ENCODE measurements at regions of chr11 and their contacts with region 1.

Region 1: GRCh38 chr11:33904102-33904501 is 12.2 kb upstream of the LMO2 start:
- DNase-seq: no peak
- ATAC-seq: no peak

Region 2: DNA sequence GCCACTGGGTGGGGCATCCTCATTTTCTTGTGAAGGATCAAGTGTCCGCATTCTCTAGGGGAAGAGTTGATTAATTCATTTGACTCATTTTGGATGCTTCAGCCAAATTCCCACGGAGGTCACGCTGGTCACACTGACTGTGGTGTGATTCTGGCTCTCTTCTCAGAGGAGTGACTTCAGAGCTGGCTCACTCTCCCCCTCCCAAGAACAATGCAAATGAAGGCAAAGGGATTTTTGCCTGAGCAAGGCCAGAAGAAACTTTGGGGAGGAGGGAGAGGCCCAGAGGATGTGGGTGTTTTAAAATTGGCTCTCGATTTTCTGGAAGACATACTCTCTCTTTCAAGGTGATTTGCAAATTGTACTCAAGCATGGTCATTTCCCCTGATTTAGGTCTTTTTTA is 38.9 kb after region 1 on chr11:
- intact Hi-C with region 1: loop called (anchors 1 kb)
- DNase-seq: peak; percentile 67
- ATAC-seq: peak; percentile 51

Measured in Right ventricle myocardium inferior (tissue), 1 donor.